A673 (cell line): ENCODE measurements at regions of chr13 and their contacts with region 1.

Region 1: GRCh38 chr13:68304286-68304893 is 1074.3 kb upstream of the PCDH9 start:
- DNase-seq: peak; percentile 38
- H3K4me3 ChIP-seq: no peak overlapping the region
- H3K27ac ChIP-seq: no peak overlapping the region
- H3K4me1 ChIP-seq: no peaks in the 10 kb centered on the region
- H3K27me3 ChIP-seq: no peaks in the 10 kb centered on the region
- CTCF ChIP-seq: peak; percentile 65

Region 2: GRCh38 chr13:68358294-68358705 is 53.9 kb after region 1 on chr13:
- CTCF ChIA-PET with region 1: no interaction called
- POLR2A ChIA-PET with region 1: no interaction called
- intact Hi-C with region 1: no loop called
- DNase-seq: no peak
- H3K4me3 ChIP-seq: no peak overlapping the region
- H3K27ac ChIP-seq: no peak overlapping the region
- H3K4me1 ChIP-seq: no peaks in the 10 kb centered on the region
- H3K27me3 ChIP-seq: no peaks in the 10 kb centered on the region
- CTCF ChIP-seq: no peak

Region 3: GRCh38 chr13:68927387-68928026 is 623.1 kb after region 1 on chr13:
- CTCF ChIA-PET with region 1: no interaction called
- POLR2A ChIA-PET with region 1: no interaction called
- intact Hi-C with region 1: loop called (anchors 5 kb)
- DNase-seq: peak; percentile 10
- H3K4me3 ChIP-seq: no peak overlapping the region
- H3K27ac ChIP-seq: no peak overlapping the region
- H3K4me1 ChIP-seq: no peaks in the 10 kb centered on the region
- H3K27me3 ChIP-seq: no peaks in the 10 kb centered on the region
- CTCF ChIP-seq: peak; percentile 50

Region 4: GRCh38 chr13:69324090-69324886 is 1019.9 kb after region 1 on chr13:
- CTCF ChIA-PET with region 1: no interaction called
- POLR2A ChIA-PET with region 1: no interaction called
- intact Hi-C with region 1: loop called (anchors 10 kb)
- DNase-seq: peak; percentile 36
- H3K4me3 ChIP-seq: no peak overlapping the region
- H3K27ac ChIP-seq: no peak overlapping the region
- H3K4me1 ChIP-seq: no peaks in the 10 kb centered on the region
- H3K27me3 ChIP-seq: no peaks in the 10 kb centered on the region
- CTCF ChIP-seq: peak; percentile 41